ENCODE measurements at regions of chrX and their contacts with region 1.

Region 1: GRCh38 chrX:70454441-70455365 is 10.1 kb downstream of the DLG3 start:
- DNase-seq: peak; percentile 72
- ATAC-seq: peak; percentile 92

Region 2: GRCh38 chrX:70479922-70480659 is 25.4 kb after region 1 on chrX:
- intact Hi-C with region 1: loop called (anchors 1 kb)
- DNase-seq: no peak
- ATAC-seq: peak; percentile 52

Region 3: GRCh38 chrX:70554081-70554480 is 99.4 kb after region 1 on chrX:
- intact Hi-C with region 1: loop called (anchors 2 kb)
- DNase-seq: no peak
- ATAC-seq: no peak

Region 4: GRCh38 chrX:70664726-70665125 is 210.0 kb after region 1 on chrX:
- intact Hi-C with region 1: loop called (anchors 10 kb)
- DNase-seq: no peak
- ATAC-seq: no peak